ENCODE measurements at regions of chr19 and their contacts with region 1.

Region 1: GRCh38 chr19:18846862-18847548 is 15.2 kb downstream of the UPF1 start:
- DNase-seq: peak; percentile 59
- H3K4me3 ChIP-seq: no peak overlapping the region
- H3K27ac ChIP-seq: no peak overlapping the region
- H3K4me1 ChIP-seq: peaks cover 56% of the 10 kb centered on the region
- H3K27me3 ChIP-seq: no peaks in the 10 kb centered on the region
- CTCF ChIP-seq: peak; percentile 91 to 96

Region 2: GRCh38 chr19:18450931-18451845 is 395.8 kb before region 1 on chr19:
- CTCF ChIA-PET with region 1: no interaction called
- dilution Hi-C with region 1: no loop called
- in situ Hi-C with region 1: loop called in 1 of 2 experiments (anchors 10 kb)
- intact Hi-C with region 1: loop called (anchors 5 kb)
- DNase-seq: no peak
- H3K4me3 ChIP-seq: no peak overlapping the region
- H3K27ac ChIP-seq: no peak overlapping the region
- H3K4me1 ChIP-seq: peaks cover 9% of the 10 kb centered on the region
- H3K27me3 ChIP-seq: no peaks in the 10 kb centered on the region
- CTCF ChIP-seq: peak; percentile 92 to 98

Region 3: GRCh38 chr19:18636183-18636968 is 210.6 kb before region 1 on chr19:
- CTCF ChIA-PET with region 1: interaction called, 15 read pairs
- dilution Hi-C with region 1: no loop called
- in situ Hi-C with region 1: no loop called
- intact Hi-C with region 1: no loop called
- DNase-seq: peak; percentile 97
- H3K4me3 ChIP-seq: peak overlapping the region; percentile 77 to 94 (median 93)
- H3K27ac ChIP-seq: peak overlapping the region; percentile 22
- H3K4me1 ChIP-seq: peaks cover 5% of the 10 kb centered on the region
- H3K27me3 ChIP-seq: no peaks in the 10 kb centered on the region
- CTCF ChIP-seq: no peak

Region 4: GRCh38 chr19:18700501-18701249 is 146.3 kb before region 1 on chr19:
- CTCF ChIA-PET with region 1: no interaction called
- dilution Hi-C with region 1: no loop called
- in situ Hi-C with region 1: no loop called
- intact Hi-C with region 1: no loop called
- DNase-seq: peak; percentile 59
- H3K4me3 ChIP-seq: peak overlapping the region; percentile 20 to 34 (median 25)
- H3K27ac ChIP-seq: no peak overlapping the region
- H3K4me1 ChIP-seq: peaks cover 24% of the 10 kb centered on the region
- H3K27me3 ChIP-seq: no peaks in the 10 kb centered on the region
- CTCF ChIP-seq: no peak

Region 5: GRCh38 chr19:18756896-18757295 is 90.1 kb before region 1 on chr19:
- CTCF ChIA-PET with region 1: no interaction called
- dilution Hi-C with region 1: loop called (anchors 5 kb)
- in situ Hi-C with region 1: no loop called
- intact Hi-C with region 1: no loop called
- DNase-seq: peak; percentile 90
- H3K4me3 ChIP-seq: no peak overlapping the region
- H3K27ac ChIP-seq: peak overlapping the region; percentile 66
- H3K4me1 ChIP-seq: peaks cover 21% of the 10 kb centered on the region
- H3K27me3 ChIP-seq: no peaks in the 10 kb centered on the region
- CTCF ChIP-seq: peak in 1 of 2 donors; percentile 23

Region 6: DNA sequence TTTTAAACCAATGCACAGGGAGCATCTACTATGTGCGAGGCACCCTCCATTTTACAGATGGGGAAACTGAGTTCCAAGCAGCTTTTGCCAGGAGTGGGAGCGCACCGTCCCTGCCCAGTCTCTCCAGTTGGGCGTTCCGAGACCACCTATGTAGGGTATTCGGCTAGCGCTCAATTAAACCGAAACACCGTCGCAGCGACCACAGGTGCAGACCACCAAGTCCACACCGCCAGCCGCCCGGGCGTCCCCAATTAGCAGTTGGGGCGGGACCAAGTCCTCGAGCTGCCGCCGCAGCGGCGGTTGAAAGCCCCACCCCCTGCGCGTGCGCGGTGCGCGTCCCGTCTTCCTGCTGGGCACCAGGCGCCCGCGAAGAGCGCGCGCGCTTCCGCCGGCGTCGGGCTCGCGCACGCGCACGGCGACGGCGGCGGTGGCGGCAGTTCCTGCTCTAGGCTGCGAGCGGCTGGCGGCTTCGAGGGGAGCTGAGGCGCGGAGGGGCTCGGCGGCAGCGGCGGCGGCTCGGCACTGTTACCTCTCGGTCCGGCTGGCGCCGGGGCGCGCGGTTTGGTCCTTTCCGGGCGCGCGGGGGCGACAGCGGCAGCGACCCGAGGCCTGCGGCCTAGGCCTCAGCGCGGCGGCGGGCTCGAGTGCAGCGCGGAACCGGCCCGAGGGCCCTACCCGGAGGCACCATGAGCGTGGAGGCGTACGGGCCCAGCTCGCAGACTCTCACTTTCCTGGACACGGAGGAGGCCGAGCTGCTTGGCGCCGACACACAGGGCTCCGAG is 15.3 kb before region 1 on chr19 and contains the start of gene UPF1:
- CTCF ChIA-PET with region 1: interaction called, 7 read pairs
- dilution Hi-C with region 1: no loop called
- in situ Hi-C with region 1: no loop called
- intact Hi-C with region 1: loop called (anchors 2 kb)
- DNase-seq: peak; percentile 86
- H3K4me3 ChIP-seq: peak within 1 kb of the TSS; percentile 87 to 90 (median 88)
- H3K27ac ChIP-seq: peak within 1 kb of the TSS; percentile 54
- H3K4me1 ChIP-seq: peaks cover 9% of the 10 kb centered on the region
- H3K27me3 ChIP-seq: no peaks in the 10 kb centered on the region
- CTCF ChIP-seq: no peak
- total RNA-seq, gene UPF1: 74.5 to 82.0 TPM

Region 7: DNA sequence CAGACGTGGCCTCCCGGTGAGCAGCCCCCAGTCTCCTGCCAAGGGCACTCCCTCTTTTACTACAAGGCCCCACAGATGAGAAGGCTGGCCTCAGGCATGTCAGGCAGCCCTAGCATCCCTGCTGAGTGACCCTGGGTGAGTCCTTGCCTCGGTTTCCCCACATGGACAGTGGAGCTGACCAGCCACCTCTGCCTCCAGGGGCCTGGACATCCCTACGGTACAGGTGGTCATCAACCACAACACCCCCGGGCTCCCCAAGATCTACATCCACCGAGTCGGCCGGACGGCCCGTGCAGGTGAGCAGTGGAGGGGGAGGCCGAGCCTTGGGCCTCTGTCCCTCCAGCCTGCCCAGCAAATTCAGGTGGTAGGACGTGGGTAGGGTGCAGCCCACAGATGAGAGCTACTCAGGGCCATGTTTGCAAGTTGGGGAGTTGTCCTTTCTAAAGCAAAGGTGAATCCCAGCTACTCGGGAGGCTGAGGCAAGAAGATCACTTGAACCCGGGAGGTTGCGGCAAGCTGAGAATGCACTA is 77.7 kb after region 1 on chr19:
- CTCF ChIA-PET with region 1: no interaction called
- dilution Hi-C with region 1: loop called (anchors 5 kb)
- in situ Hi-C with region 1: no loop called
- intact Hi-C with region 1: no loop called
- DNase-seq: no peak
- H3K4me3 ChIP-seq: no peak overlapping the region
- H3K27ac ChIP-seq: no peak overlapping the region
- H3K4me1 ChIP-seq: peaks cover 8% of the 10 kb centered on the region
- H3K27me3 ChIP-seq: no peaks in the 10 kb centered on the region
- CTCF ChIP-seq: no peak